Common myeloid progenitor, CD34-positive (primary cell): ENCODE measurements at regions of chr1 and their contacts with region 1.

Region 1: DNA sequence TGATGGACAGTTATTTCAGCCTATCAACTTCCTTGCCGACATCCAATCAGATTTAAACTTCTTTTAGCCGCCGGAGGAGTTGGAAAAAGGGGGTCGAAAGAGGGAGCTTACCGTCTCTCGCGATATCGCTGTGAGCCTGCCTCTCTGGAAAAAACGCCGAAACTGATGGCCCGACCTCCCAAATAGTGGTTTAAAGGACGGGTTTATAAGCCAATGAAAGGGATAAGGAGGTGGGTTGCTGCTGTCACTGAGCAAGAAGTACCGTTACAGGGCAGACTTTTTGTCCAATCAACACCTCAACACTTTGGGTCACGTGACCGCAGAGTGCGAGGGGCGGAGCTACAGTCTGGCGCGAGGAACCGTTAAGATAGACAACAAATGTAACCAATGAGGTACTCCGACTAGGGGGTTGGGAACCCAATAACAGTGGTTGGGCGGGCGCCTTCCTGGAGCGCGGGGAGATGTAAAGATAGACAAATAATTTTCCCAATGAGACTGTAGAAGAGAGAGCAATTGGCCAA is at the start of gene RBM15:
- DNase-seq: peak; percentile 100
- H3K4me3 ChIP-seq: peak within 1 kb of the TSS; percentile 81 to 100 (median 99)
- H3K27ac ChIP-seq: peak within 1 kb of the TSS; percentile 99
- H3K4me1 ChIP-seq: peaks cover 15 to 62% (median 45%) of the 10 kb centered on the region in 4 experiments
- H3K27me3 ChIP-seq: no peaks in the 10 kb centered on the region

Region 2: GRCh38 chr1:110298991-110299390 is 40.0 kb before region 1 on chr1:
- CTCF ChIA-PET with region 1: no interaction called
- POLR2A ChIA-PET with region 1: no interaction called
- DNase-seq: no peak
- H3K4me3 ChIP-seq: no peak overlapping the region
- H3K27ac ChIP-seq: no peak overlapping the region
- H3K4me1 ChIP-seq: no peaks in the 10 kb centered on the region
- H3K27me3 ChIP-seq: peaks cover 0 to 6% (median 0%) of the 10 kb centered on the region in 5 experiments

Region 3: DNA sequence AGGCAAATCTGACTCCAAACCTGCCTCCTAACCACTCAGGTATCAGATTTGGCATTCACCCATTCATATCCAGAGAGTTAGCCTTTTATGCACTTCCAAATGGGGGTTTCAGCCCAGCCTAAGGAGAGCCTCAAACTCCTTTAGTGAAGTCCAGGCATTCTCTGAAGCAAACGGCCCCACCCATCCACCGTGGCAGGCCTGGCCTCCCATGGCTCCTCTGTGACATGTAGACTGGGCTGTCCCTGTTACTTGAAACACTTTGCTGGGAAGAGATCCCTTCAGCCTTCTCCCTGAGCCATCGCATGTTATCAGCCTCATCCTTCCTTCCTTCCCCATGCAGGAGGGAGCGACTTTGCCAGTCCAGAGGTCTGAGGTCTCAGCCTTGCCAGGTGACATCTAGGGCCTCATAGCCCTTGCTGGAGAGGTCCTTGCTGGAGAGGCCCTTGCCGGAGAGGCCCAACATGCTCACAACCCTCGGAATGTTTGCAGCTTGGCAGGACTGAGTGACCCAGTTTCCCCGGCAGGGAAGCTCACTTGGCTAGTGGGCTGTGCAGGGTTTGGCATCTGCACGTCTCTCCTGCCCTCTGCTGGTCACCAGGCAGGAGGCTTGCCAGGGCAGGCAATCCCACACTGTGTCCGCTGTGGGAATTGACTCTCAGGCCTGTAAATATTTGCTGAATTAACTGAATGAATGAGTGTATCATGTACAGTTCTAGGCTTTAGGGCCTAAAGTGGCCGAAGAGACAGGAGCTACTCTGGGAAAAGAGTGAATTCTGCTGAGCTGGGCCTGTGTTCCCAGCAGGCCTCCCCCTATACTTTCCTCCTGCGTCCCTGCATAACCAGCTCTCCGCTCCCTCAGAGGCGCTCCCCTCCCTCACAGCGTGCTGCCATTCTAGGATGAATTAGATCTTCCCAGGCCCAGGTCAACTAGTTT is 26.5 kb before region 1 on chr1:
- CTCF ChIA-PET with region 1: interaction called, 47 read pairs
- POLR2A ChIA-PET with region 1: interaction called, 4 read pairs
- DNase-seq: peak; percentile 77 to 89 (median 84)
- H3K4me3 ChIP-seq: no peak overlapping the region
- H3K27ac ChIP-seq: no peak overlapping the region
- H3K4me1 ChIP-seq: peaks cover 0 to 3% (median 0%) of the 10 kb centered on the region in 4 experiments
- H3K27me3 ChIP-seq: peaks cover 0 to 2% (median 0%) of the 10 kb centered on the region in 5 experiments

Region 4: GRCh38 chr1:110319332-110320152 is 19.4 kb before region 1 on chr1:
- CTCF ChIA-PET with region 1: interaction called, 11 read pairs
- POLR2A ChIA-PET with region 1: no interaction called
- DNase-seq: no peak
- H3K4me3 ChIP-seq: no peak overlapping the region
- H3K27ac ChIP-seq: no peak overlapping the region
- H3K4me1 ChIP-seq: no peaks in the 10 kb centered on the region
- H3K27me3 ChIP-seq: peaks cover 0 to 2% (median 0%) of the 10 kb centered on the region in 5 experiments

Region 5: GRCh38 chr1:110328274-110328673 is 10.7 kb before region 1 on chr1:
- CTCF ChIA-PET with region 1: interaction called, 12 read pairs
- POLR2A ChIA-PET with region 1: no interaction called
- DNase-seq: no peak
- H3K4me3 ChIP-seq: no peak overlapping the region
- H3K27ac ChIP-seq: no peak overlapping the region
- H3K4me1 ChIP-seq: no peaks in the 10 kb centered on the region
- H3K27me3 ChIP-seq: no peaks in the 10 kb centered on the region

Region 6: GRCh38 chr1:110393691-110394564 is 55.0 kb after region 1 on chr1:
- CTCF ChIA-PET with region 1: no interaction called
- POLR2A ChIA-PET with region 1: no interaction called
- DNase-seq: no peak
- H3K4me3 ChIP-seq: no peak overlapping the region
- H3K27ac ChIP-seq: no peak overlapping the region
- H3K4me1 ChIP-seq: no peaks in the 10 kb centered on the region
- H3K27me3 ChIP-seq: no peaks in the 10 kb centered on the region

Region 7: DNA sequence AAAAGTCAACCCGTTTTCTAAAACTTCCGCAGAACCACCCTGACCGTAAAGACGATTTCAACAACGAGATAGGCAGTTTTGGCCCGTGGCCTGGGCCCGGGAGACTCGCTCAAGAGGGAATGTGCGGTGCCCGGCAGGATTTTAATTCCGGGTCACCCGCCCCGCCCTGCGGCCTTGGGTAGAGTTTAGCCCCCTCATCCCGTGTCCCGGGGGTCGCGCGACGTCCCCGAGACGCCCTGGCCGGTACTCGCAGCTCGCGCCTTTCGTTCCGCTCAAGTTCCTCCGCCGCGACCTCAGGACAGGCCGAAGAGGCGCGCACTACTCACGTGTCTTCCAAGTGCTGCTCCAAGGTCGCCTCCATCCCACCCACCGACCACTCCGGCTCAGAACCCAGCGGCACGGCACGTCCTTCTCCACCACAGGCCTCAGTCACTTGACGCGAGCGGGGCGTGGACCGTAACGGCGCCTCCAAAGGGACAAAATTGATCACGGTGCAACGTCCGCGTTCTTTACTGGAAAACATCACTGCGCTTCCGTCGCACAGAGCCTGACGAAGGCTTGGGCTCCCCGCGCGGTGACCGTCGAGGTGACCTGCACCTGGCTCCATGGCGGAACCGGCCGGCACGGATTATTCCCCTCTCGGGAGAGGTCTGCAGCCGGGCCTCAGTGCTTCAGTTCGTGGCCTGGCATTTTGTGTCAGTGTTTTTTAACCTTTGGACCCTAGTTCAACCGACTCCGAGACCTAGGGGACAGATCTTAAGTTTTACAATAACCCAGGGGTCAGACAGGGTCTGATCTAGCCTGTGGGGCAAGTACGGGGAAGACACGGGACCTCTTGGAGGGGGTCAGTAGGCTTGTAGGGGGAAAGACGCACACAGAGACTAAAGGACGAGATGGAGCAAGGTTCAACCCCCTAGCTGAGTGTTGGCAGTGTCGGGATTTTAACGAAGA is 68.6 kb after region 1 on chr1 and contains the start of gene LAMTOR5:
- CTCF ChIA-PET with region 1: interaction called, 13 read pairs
- POLR2A ChIA-PET with region 1: interaction called, 4 read pairs
- DNase-seq: peak; percentile 95 to 97 (median 97)
- H3K4me3 ChIP-seq: peak within 1 kb of the TSS; percentile 84 to 98 (median 93)
- H3K27ac ChIP-seq: peak within 1 kb of the TSS; percentile 89 to 94
- H3K4me1 ChIP-seq: peaks cover 12 to 22% (median 14%) of the 10 kb centered on the region in 4 experiments
- H3K27me3 ChIP-seq: no peaks in the 10 kb centered on the region

Region 8: DNA sequence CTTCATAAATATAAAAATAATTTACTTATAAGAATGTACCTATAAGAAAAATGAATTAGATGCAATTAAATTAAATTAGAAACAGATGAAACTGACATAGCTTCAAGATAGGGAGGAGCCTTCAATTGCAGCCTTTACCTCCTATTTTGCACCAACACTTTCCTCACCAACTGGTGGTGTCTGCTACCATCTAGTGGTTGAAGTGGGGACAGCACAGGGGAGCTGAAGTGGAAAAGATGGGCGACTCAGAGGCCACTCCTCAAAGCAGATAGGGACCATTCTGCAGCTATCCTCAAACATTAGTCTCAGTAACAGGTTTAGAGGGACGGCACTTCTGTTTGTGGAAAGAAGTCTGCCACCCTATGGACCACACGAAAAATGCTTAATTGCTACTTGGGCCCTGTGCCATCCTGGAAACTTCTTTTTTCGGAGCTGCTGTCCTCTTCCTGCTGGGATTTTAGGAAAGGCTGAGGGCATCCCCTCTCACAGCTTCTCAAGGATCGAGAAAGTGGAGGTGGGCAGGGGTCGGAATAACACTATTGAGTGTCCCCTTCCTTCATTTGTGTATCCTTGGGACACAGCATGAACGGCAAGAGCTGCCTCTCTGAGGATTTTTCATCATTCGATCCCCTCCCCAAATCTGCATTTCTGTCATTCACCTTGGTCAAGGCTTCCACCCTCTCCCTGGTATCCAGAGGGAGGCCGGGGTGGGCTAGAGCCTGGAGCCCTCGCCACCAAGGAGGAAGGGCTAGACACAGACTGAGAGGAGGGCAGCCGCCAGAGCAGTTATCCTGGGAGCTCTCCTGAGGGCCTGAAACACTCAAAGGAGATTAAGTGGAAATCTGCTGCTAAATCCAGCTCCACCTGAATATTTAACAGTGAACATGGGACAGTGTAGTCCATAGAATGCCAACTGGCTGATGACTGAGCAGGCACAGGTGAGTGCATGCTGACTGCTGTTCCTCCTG is 121.6 kb after region 1 on chr1:
- CTCF ChIA-PET with region 1: interaction called, 14 read pairs
- POLR2A ChIA-PET with region 1: no interaction called
- DNase-seq: peak; percentile 78 to 91 (median 86)
- H3K4me3 ChIP-seq: no peak overlapping the region
- H3K27ac ChIP-seq: no peak overlapping the region
- H3K4me1 ChIP-seq: no peaks in the 10 kb centered on the region
- H3K27me3 ChIP-seq: peaks cover 0 to 2% (median 0%) of the 10 kb centered on the region in 5 experiments

Region 9: GRCh38 chr1:110477445-110477957 is 138.6 kb after region 1 on chr1:
- CTCF ChIA-PET with region 1: no interaction called
- POLR2A ChIA-PET with region 1: no interaction called
- DNase-seq: peak in 1 of 3 donors; percentile 20
- H3K4me3 ChIP-seq: no peak overlapping the region
- H3K27ac ChIP-seq: no peak overlapping the region
- H3K4me1 ChIP-seq: peaks cover 0 to 4% (median under 1%) of the 10 kb centered on the region in 4 experiments
- H3K27me3 ChIP-seq: peaks cover 0 to 4% (median 0%) of the 10 kb centered on the region in 5 experiments